Naive thymus-derived CD4-positive, alpha-beta T cell (primary cell): ENCODE measurements at regions of chrX and their contacts with region 1.

Region 1: GRCh38 chrX:16870095-16870860 is at the start of gene RBBP7:
- DNase-seq: peak; percentile 88 to 98 (median 94)
- ATAC-seq: peak; percentile 91
- H3K4me3 ChIP-seq: peak within 1 kb of the TSS; percentile 69
- H3K4me3 Mint-ChIP-seq: peak within 1 kb of the TSS; percentile 93 to 99 (median 96)
- H3K27ac ChIP-seq: peak within 1 kb of the TSS; percentile 96
- H3K27ac Mint-ChIP-seq: peak within 1 kb of the TSS; percentile 89 to 98 (median 97)
- H3K4me1 ChIP-seq: peaks cover 0 to 23% of the 10 kb centered on the region in 2 donors
- H3K4me1 Mint-ChIP-seq: peaks cover 7 to 50% (median 39%) of the 10 kb centered on the region in 7 donors
- H3K27me3 ChIP-seq: no peaks in the 10 kb centered on the region
- H3K27me3 Mint-ChIP-seq: peaks cover 0 to 9% (median 0%) of the 10 kb centered on the region in 5 donors
- total RNA-seq, gene RBBP7: 82.9 to 112 (median 94.6) TPM

Region 2: GRCh38 chrX:14872851-14873675 is 1997.2 kb before region 1 on chrX and contains the starts of genes FANCB and MOSPD2:
- CTCF ChIA-PET with region 1: no interaction called
- POLR2A ChIA-PET with region 1: interaction called, 3 read pairs
- intact Hi-C with region 1: loop called in 1 of 2 experiments (anchors 5 kb)
- DNase-seq: peak; percentile 83 to 96 (median 93)
- ATAC-seq: peak; percentile 95
- H3K4me3 ChIP-seq: peak within 1 kb of the TSS; percentile 76
- H3K4me3 Mint-ChIP-seq: peak within 1 kb of the TSS; percentile 82 to 94 (median 88)
- H3K27ac ChIP-seq: peak within 1 kb of the TSS; percentile 76
- H3K27ac Mint-ChIP-seq: peak within 1 kb of the TSS; percentile 75 to 93 (median 88)
- H3K4me1 ChIP-seq: peaks cover 4 to 9% of the 10 kb centered on the region in 2 donors
- H3K4me1 Mint-ChIP-seq: peaks cover 0 to 34% (median 14%) of the 10 kb centered on the region in 7 donors
- H3K27me3 ChIP-seq: no peaks in the 10 kb centered on the region
- H3K27me3 Mint-ChIP-seq: no peaks in the 10 kb centered on the region
- total RNA-seq, gene FANCB: 3.3 to 8.3 (median 4.0) TPM
- total RNA-seq, gene MOSPD2: 7.1 to 15.7 (median 13.4) TPM

Region 3: GRCh38 chrX:16719334-16720084 is 150.8 kb before region 1 on chrX and contains the start of gene SYAP1:
- CTCF ChIA-PET with region 1: no interaction called
- POLR2A ChIA-PET with region 1: no interaction called
- intact Hi-C with region 1: loop called (anchors 1 kb)
- DNase-seq: peak; percentile 85 to 100 (median 96)
- ATAC-seq: peak; percentile 96
- H3K4me3 ChIP-seq: peak within 1 kb of the TSS; percentile 95
- H3K4me3 Mint-ChIP-seq: peak within 1 kb of the TSS; percentile 88 to 98 (median 94)
- H3K27ac ChIP-seq: peak within 1 kb of the TSS; percentile 99
- H3K27ac Mint-ChIP-seq: peak within 1 kb of the TSS; percentile 92 to 100 (median 99)
- H3K4me1 ChIP-seq: peaks cover 0 to 10% of the 10 kb centered on the region in 2 donors
- H3K4me1 Mint-ChIP-seq: peaks cover 2 to 63% (median 39%) of the 10 kb centered on the region in 7 donors
- H3K27me3 ChIP-seq: no peaks in the 10 kb centered on the region
- H3K27me3 Mint-ChIP-seq: no peaks in the 10 kb centered on the region
- total RNA-seq, gene SYAP1: 15.4 to 36.9 (median 15.6) TPM

Region 4: GRCh38 chrX:16826207-16826606 is 44.1 kb before region 1 on chrX:
- CTCF ChIA-PET with region 1: no interaction called
- POLR2A ChIA-PET with region 1: no interaction called
- intact Hi-C with region 1: loop called in 1 of 2 experiments (anchors 5 kb)
- DNase-seq: peak in 5 of 9 donors; percentile 10 to 37 (median 19)
- ATAC-seq: peak; percentile 57
- H3K4me3 ChIP-seq: no peak overlapping the region
- H3K4me3 Mint-ChIP-seq: no peak overlapping the region
- H3K27ac ChIP-seq: no peak overlapping the region
- H3K27ac Mint-ChIP-seq: no peak overlapping the region
- H3K4me1 ChIP-seq: no peaks in the 10 kb centered on the region
- H3K4me1 Mint-ChIP-seq: peaks cover 0 to 11% (median 0%) of the 10 kb centered on the region in 7 donors
- H3K27me3 ChIP-seq: no peaks in the 10 kb centered on the region
- H3K27me3 Mint-ChIP-seq: no peaks in the 10 kb centered on the region

Region 5: DNA sequence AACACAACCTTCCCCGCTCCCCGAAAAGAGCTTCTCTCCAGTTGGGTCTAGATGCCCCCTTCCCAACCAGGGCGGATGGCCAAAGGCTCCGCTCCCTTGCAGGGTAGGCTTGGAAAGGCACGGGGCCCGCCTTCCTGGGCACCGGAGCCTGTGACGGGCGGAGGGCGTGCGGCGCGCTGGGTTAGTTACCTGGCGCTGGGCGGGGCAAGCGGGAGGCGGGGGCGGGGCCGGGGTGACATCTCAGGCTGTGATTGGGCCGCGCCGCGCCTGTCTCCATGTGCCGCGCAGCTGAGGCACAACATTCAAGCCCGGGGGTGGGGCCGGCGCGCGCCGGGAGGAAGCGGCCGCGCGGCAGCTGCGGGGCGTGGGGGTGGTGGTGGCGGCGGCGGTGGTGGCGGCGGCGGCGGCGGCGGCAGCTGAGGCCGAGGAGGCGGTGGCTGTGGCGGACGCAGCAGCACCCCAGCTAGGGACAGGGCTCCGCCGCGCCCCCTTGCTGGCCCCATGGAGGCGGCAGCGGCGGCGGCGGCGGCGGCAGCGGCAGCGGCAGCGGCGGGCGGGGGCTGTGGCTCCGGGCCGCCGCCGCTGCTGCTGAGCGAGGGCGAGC is 76.2 kb after region 1 on chrX and contains the start of gene REPS2:
- CTCF ChIA-PET with region 1: no interaction called
- POLR2A ChIA-PET with region 1: no interaction called
- intact Hi-C with region 1: loop called in 1 of 2 experiments (anchors 1 kb)
- DNase-seq: peak; percentile 51 to 82 (median 70)
- ATAC-seq: peak; percentile 98
- H3K4me3 ChIP-seq: peak within 1 kb of the TSS; percentile 39
- H3K4me3 Mint-ChIP-seq: peak within 1 kb of the TSS; percentile 77 to 88 (median 84)
- H3K27ac ChIP-seq: peak within 1 kb of the TSS; percentile 7
- H3K27ac Mint-ChIP-seq: peak within 1 kb of the TSS in 7 of 9 donors; percentile 51 to 86 (median 73)
- H3K4me1 ChIP-seq: no peaks in the 10 kb centered on the region
- H3K4me1 Mint-ChIP-seq: peaks cover 0 to 4% (median 0%) of the 10 kb centered on the region in 7 donors
- H3K27me3 ChIP-seq: no peaks in the 10 kb centered on the region
- H3K27me3 Mint-ChIP-seq: peaks cover 3 to 25% (median 6%) of the 10 kb centered on the region in 5 donors
- total RNA-seq, gene REPS2: 1.1 to 6.2 (median 1.9) TPM in 4 of 5 experiments, not detected in the other